ENCODE measurements at regions of chr1 and their contacts with region 1.

Region 1: DNA sequence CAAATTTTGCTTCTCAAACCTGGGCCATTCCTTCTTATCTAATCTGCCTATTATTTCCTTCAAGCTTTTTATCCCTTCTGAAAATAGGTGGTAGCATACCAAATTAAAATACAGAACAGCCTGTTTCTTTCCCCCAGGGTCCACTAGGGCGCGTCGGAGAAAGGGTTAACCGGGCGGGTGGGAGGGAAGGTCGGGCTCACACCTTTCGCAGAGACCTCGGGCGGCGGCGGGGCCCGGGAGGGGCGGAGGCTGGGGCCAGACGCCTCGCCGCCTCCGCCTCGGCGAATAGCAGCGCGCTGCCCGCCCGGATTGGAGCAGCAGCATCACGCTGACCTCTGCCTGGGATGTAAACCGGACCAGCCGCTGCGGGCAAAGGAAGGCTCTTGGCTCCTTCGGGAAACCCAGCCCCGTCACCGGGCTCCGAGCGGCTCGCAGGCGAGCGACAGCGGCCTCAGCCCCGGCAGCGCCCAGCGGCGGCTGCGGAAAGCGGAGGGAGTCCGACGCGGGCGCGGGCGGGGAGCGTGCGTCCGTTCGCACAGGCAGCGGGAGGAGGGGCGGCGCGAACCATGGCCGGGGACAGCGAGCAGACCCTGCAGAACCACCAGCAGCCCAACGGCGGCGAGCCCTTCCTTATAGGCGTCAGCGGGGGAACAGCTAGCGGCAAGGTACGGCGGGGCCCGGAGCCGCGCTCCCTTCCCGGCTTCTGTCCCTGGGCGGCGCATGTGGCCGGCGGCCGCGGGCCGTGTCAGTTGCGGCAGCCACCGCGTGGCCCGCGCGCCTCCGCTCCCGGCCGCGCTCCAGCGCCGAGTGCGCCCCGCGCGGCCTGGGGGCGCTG is at the start of gene UCK2:
- DNase-seq: peak; percentile 72 to 80
- H3K4me3 ChIP-seq: peak within 1 kb of the TSS; percentile 62
- H3K27ac ChIP-seq: peak within 1 kb of the TSS; percentile 79
- H3K4me1 ChIP-seq: peaks cover 17% of the 10 kb centered on the region
- H3K27me3 ChIP-seq: no peaks in the 10 kb centered on the region
- CTCF ChIP-seq: no peak; the same call in 1 of the 2 replicates
- total RNA-seq, gene UCK2: 54.8 and 59.9 TPM in 2 replicates

Region 2: GRCh38 chr1:165073185-165074007 is 754.1 kb before region 1 on chr1:
- CTCF ChIA-PET with region 1: no interaction called
- POLR2A ChIA-PET with region 1: no interaction called
- intact Hi-C with region 1: no loop called
- DNase-seq: peak; percentile 12 to 46
- H3K4me3 ChIP-seq: no peak overlapping the region
- H3K27ac ChIP-seq: no peak overlapping the region
- H3K4me1 ChIP-seq: no peaks in the 10 kb centered on the region
- H3K27me3 ChIP-seq: no peaks in the 10 kb centered on the region
- CTCF ChIP-seq: peak; percentile 85

Region 3: DNA sequence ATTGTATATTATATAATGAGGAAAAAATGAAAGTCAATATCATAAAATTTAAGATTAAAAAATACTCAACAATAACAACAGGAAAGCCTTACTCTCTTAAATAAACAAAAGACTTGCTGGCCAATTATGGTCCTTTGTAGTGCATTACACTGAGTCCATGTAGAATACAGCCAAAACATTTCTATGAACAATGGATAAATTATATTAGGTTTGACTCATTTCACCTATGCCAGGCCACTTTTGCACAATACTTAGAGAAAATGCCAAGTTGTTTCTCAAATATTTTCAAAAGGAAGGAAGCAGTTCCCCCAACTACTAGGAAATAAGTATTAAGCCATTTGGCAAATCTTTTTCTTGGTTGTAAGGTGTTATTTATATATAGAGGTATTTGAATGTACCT is 19.9 kb before region 1 on chr1:
- CTCF ChIA-PET with region 1: no interaction called
- POLR2A ChIA-PET with region 1: no interaction called
- intact Hi-C with region 1: no loop called
- DNase-seq: peak in 1 of 2 experiments; percentile 48
- H3K4me3 ChIP-seq: no peak overlapping the region
- H3K27ac ChIP-seq: no peak overlapping the region
- H3K4me1 ChIP-seq: no peaks in the 10 kb centered on the region
- H3K27me3 ChIP-seq: no peaks in the 10 kb centered on the region
- CTCF ChIP-seq: no peak

Region 4: GRCh38 chr1:165884690-165885304 is 57.3 kb after region 1 on chr1:
- CTCF ChIA-PET with region 1: no interaction called
- POLR2A ChIA-PET with region 1: no interaction called
- intact Hi-C with region 1: loop called (anchors 5 kb)
- DNase-seq: no peak
- H3K4me3 ChIP-seq: no peak overlapping the region
- H3K27ac ChIP-seq: 0 out of 2 replicates have a peak overlapping the region, but pooled peaks have one; percentile 9
- H3K4me1 ChIP-seq: peaks cover 28% of the 10 kb centered on the region
- H3K27me3 ChIP-seq: no peaks in the 10 kb centered on the region
- CTCF ChIP-seq: no peak

Region 5: GRCh38 chr1:165898837-165899236 is 71.4 kb after region 1 on chr1:
- CTCF ChIA-PET with region 1: no interaction called
- POLR2A ChIA-PET with region 1: no interaction called
- intact Hi-C with region 1: loop called (anchors 2 kb)
- DNase-seq: peak in 1 of 2 experiments; percentile 26
- H3K4me3 ChIP-seq: no peak overlapping the region
- H3K27ac ChIP-seq: no peak overlapping the region
- H3K4me1 ChIP-seq: no peaks in the 10 kb centered on the region
- H3K27me3 ChIP-seq: no peaks in the 10 kb centered on the region
- CTCF ChIP-seq: no peak

Region 6: GRCh38 chr1:166153525-166154314 is 326.2 kb after region 1 on chr1:
- CTCF ChIA-PET with region 1: no interaction called
- POLR2A ChIA-PET with region 1: no interaction called
- intact Hi-C with region 1: no loop called
- DNase-seq: no peak
- H3K4me3 ChIP-seq: no peak overlapping the region
- H3K27ac ChIP-seq: no peak overlapping the region
- H3K4me1 ChIP-seq: no peaks in the 10 kb centered on the region
- H3K27me3 ChIP-seq: peaks cover 5% of the 10 kb centered on the region; the same call in 1 of the 2 replicates
- CTCF ChIP-seq: no peak